ENCODE measurements at regions of chr4 and their contacts with region 1.

Region 1: GRCh38 chr4:39697740-39698423 is at the start of gene UBE2K:
- DNase-seq: peak; percentile 94
- H3K4me3 ChIP-seq: peak within 1 kb of the TSS; percentile 85 to 92 (median 88)
- H3K27ac ChIP-seq: peak within 1 kb of the TSS; percentile 92 to 96 (median 94)
- H3K4me1 ChIP-seq: peaks cover 12 to 50% (median 40%) of the 10 kb centered on the region in 4 donors
- H3K27me3 ChIP-seq: no peaks in the 10 kb centered on the region
- CTCF ChIP-seq: peak in 1 of 3 experiments; percentile 18
- EP300 ChIP-seq: no peak
- POLR2A ChIP-seq: peak; percentile 78
- total RNA-seq, gene UBE2K: 31.7 to 41.5 (median 34.3) TPM

Region 2: GRCh38 chr4:39823191-39823590 is 125.3 kb after region 1 on chr4:
- intact Hi-C with region 1: loop called (anchors 10 kb)
- DNase-seq: no peak
- H3K4me3 ChIP-seq: no peak overlapping the region
- H3K27ac ChIP-seq: no peak overlapping the region
- H3K4me1 ChIP-seq: peaks cover 0 to 7% (median 2%) of the 10 kb centered on the region in 4 donors
- H3K27me3 ChIP-seq: no peaks in the 10 kb centered on the region
- CTCF ChIP-seq: no peak
- EP300 ChIP-seq: no peak
- POLR2A ChIP-seq: no peak

Region 3: GRCh38 chr4:39977489-39978377 is 279.9 kb after region 1 on chr4 and contains the start of gene PDS5A:
- intact Hi-C with region 1: loop called (anchors 2 kb)
- DNase-seq: peak; percentile 93
- H3K4me3 ChIP-seq: peak within 1 kb of the TSS; percentile 84 to 97 (median 90)
- H3K27ac ChIP-seq: peak within 1 kb of the TSS; percentile 96 to 97 (median 97)
- H3K4me1 ChIP-seq: peaks cover 14 to 41% (median 31%) of the 10 kb centered on the region in 4 donors
- H3K27me3 ChIP-seq: no peaks in the 10 kb centered on the region
- CTCF ChIP-seq: peak; percentile 84 to 86 (median 85)
- EP300 ChIP-seq: no peak
- POLR2A ChIP-seq: no peak
- total RNA-seq, gene PDS5A: 48.2 to 56.1 (median 51.3) TPM

Region 4: GRCh38 chr4:40656201-40656901 is 958.5 kb after region 1 on chr4:
- intact Hi-C with region 1: no loop called
- DNase-seq: no peak
- H3K4me3 ChIP-seq: no peak overlapping the region
- H3K27ac ChIP-seq: no peak overlapping the region
- H3K4me1 ChIP-seq: no peaks in the 10 kb centered on the region
- H3K27me3 ChIP-seq: no peaks in the 10 kb centered on the region
- CTCF ChIP-seq: no peak
- EP300 ChIP-seq: no peak
- POLR2A ChIP-seq: no peak

Measured in esophagus muscularis mucosa (tissue), 4 donors.